Activated CD4-positive, alpha-beta memory T cell treated with anti-CD3 and anti-CD28 coated beads, Interleukin-2, amount 10 ng/mL, durations not matched to agents 7 days and 5 days (primary cell): ENCODE measurements at regions of chr1 and their contacts with region 1.

Region 1: DNA sequence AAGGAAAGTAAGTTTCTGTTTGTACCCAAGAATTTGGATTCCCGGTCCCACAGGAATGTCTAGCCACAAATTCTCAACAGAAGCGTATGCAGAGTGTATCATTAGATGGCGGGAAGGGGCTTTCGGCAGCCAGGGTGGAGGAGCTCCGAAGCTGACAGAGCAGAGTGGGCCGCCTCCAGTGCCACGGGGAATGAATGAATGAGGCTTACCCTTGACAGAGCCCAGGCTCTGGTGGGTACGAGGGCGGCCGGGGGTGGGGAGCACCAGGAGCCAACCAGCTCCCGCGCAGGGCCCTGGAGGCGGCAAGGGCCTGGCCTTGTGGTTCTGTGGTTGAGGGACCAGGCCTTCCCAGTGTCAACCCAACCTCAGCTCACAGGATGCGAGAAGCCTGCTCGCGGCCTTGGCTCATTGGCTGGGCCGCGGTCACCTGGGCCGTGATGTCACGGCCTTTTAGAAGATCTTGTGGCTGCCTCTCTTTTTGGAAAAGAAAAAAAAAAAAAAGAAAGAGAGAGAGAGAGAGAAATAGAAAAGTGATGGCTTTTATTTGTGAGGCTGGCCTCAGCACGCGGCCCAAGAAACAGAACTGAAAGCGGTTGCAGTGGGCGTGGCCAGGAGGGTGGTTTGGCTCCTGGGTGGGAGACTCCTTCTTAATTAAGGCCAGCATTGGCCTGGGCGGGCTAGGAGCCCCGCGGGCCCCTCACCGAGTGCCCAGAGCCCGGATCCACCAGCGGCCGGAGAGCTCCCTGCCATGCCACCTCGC is 34.9 kb upstream of the RUNX3 start:
- DNase-seq: peak; percentile 98
- H3K4me3 Mint-ChIP-seq: peak overlapping the region; percentile 95
- H3K27ac Mint-ChIP-seq: peak overlapping the region; percentile 94
- H3K4me1 Mint-ChIP-seq: peaks cover 80% of the 10 kb centered on the region
- H3K27me3 Mint-ChIP-seq: no peaks in the 10 kb centered on the region

Region 2: GRCh38 chr1:24847995-24848881 is 116.8 kb before region 1 on chr1:
- CTCF ChIA-PET with region 1: interaction called, 10 read pairs
- POLR2A ChIA-PET with region 1: no interaction called
- DNase-seq: peak; percentile 91
- H3K4me3 Mint-ChIP-seq: peak overlapping the region; percentile 61
- H3K27ac Mint-ChIP-seq: peak overlapping the region; percentile 52
- H3K4me1 Mint-ChIP-seq: peaks cover 26% of the 10 kb centered on the region
- H3K27me3 Mint-ChIP-seq: peaks cover 26% of the 10 kb centered on the region

Region 3: GRCh38 chr1:24984800-24985522 is 20.0 kb after region 1 on chr1:
- CTCF ChIA-PET with region 1: interaction called, 7 read pairs
- POLR2A ChIA-PET with region 1: interaction called, 12 read pairs
- DNase-seq: peak; percentile 68
- H3K4me3 Mint-ChIP-seq: no peak overlapping the region
- H3K27ac Mint-ChIP-seq: no peak overlapping the region
- H3K4me1 Mint-ChIP-seq: peaks cover 92% of the 10 kb centered on the region
- H3K27me3 Mint-ChIP-seq: peaks cover 16% of the 10 kb centered on the region

Region 4: DNA sequence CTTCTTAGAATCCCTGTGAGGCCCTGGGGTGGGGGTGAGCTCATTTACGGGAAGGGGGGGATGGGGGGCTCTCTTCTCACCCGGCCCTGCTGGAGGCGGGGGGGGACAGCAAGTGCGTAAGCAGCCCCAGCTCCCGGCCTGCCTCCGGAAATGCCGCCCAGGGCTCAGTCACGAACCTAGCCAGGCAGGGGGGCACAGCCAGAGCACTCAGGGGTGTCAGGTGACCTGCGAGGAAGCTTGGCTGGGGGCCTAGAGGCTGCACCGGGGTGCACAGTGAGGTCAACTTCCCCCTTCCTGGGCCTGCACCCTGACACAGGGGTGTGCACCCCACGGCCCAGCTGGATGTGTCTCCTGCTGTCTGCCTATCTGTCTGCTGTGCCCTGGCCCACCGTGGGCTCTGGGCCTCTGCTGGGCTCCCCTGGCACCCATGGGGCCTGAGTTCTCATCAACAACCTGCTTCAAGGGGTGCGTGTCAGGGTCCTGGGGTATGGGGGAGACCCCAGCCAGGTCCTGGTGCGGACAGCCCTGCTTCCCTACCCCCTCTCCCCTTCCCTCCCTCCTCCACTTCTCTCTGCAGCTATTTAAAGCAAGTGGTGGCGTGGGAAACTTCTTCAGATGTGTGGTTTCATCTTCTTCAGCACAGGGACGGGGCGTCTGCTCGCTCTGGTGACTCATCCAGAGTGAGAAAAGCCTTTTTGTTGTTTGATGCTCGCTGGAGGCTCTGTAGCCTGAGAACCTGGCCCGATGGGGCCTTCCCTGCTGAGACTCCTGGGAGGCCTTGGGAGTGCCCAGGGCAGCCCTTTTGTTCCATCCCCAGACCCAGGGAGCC is 57.6 kb after region 1 on chr1:
- CTCF ChIA-PET with region 1: interaction called, 36 read pairs
- POLR2A ChIA-PET with region 1: interaction called, 72 read pairs
- DNase-seq: peak; percentile 96
- H3K4me3 Mint-ChIP-seq: peak overlapping the region; percentile 73
- H3K27ac Mint-ChIP-seq: peak overlapping the region; percentile 97
- H3K4me1 Mint-ChIP-seq: peaks cover 96% of the 10 kb centered on the region
- H3K27me3 Mint-ChIP-seq: no peaks in the 10 kb centered on the region

Region 5: DNA sequence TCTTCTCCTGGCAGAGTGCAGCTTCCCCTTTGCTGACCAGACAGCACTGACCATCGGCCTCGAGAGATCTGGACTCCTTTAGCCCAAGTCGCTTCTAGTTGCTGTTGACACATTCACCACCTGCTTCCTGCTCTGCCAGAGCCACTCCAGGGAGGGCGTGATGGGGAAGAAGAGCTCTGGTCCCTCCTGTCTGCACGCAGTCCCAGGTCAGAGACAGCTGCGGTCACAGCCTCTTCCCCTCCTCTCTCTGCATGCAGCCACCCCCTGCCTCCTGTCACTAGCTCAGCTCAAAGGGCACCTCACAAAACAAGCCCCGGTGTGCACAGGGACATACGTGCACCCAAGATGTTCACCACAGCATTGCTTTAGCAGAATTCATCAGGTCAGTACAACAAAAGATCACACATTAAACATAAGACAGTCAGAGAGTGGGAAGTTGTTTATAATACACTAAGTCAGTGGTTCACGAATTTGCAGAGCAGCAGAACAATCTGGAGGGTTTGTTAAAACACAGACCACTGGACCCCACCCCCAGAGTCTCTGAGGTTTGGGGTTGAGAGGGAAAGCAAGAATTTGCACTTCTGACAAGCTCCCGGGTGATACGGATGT is 134.5 kb after region 1 on chr1:
- CTCF ChIA-PET with region 1: interaction called, 39 read pairs
- POLR2A ChIA-PET with region 1: interaction called, 7 read pairs
- DNase-seq: peak; percentile 54
- H3K4me3 Mint-ChIP-seq: no peak overlapping the region
- H3K27ac Mint-ChIP-seq: peak overlapping the region; percentile 71
- H3K4me1 Mint-ChIP-seq: peaks cover 73% of the 10 kb centered on the region
- H3K27me3 Mint-ChIP-seq: peaks cover 24% of the 10 kb centered on the region